ENCODE measurements at regions of chr1 and their contacts with region 1.

Region 1: DNA sequence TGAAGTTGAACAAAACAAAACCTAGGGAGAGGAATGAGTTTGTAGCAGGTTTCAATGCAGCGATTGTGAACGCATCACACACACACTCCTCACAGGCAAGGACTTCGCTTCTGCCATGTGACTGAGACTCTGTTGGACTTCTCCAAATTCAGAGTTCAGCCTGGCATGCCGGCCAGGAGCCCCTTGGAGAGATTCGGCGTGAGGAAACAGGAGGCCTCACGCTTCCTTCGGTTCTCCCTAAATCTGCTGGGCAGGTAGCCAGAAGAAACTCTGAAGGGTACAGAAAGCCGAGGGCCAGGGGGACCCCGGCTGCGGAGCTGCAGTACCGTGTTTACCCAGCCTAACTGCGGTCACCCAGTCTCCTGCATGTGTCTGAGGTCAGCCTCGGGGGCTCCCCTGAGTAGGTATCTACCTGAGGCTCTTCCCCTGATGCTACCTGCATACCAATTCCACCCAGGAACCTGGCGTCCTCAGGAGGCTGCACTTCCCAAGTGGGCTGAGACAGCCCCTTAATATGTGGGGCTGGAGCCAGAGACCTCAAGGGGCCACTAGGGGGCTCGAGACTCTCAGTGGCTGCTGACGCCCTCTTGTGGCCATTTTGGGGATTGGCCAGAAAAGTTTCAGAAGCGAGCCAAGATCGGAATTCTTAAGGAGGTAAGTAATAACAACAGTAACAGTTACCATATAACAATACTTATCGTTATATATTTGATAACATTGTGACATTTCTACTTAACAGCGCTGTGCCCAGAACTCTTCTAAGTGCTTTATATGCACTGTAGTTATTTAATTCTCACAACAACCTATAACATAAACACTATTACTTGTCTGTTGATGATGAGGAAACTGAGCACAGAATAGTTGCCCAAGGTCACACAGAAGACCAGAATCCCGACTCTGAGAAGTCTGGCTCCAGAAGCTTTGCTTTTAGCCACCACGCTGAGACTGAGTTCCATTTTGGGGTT is 2.7 kb upstream of the ANXA9 start:
- DNase-seq: peak; percentile 89
- H3K27ac ChIP-seq: peak overlapping the region; percentile 91
- CTCF ChIP-seq: peak; percentile 99

Region 2: DNA sequence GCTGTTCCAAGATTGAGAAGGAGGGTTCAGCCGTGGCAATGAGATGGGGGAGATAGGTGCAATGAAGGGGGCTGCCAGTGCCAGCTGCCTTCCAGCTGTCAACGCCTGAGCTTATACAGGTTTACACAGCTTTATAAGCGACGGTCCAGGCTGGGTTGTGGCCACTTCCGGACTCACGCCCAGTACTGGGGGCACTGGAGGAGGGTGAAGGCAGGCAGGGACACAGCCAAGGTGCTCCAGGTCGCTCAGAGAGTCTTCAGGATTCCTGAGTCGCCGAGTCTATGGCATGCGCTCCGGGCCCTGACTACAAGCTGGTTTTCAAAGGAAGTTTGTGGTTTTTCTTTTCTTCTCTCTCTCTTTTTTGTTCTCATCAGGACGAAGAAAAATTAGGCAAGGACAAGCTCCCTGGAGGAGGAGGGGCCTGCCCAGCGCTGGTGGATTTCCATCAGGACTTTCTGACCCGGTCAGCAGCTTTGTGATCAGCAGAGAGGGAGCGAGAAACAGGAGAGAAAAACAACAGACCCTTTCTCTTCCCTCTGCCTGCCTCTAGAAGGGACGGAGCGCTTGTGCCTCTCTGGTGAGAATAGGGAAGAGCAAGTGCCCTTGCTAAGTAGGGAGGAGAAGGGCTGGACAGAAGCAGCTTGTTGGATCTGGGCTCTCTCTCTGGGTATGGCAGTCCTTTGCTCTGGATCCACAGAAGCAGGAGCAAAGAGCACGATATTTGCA is 27.1 kb after region 1 on chr1 and contains the start of gene MINDY1:
- CTCF ChIA-PET with region 1: interaction called, 12 read pairs
- POLR2A ChIA-PET with region 1: interaction called, 7 read pairs
- DNase-seq: peak; percentile 84
- H3K27ac ChIP-seq: peak within 1 kb of the TSS; percentile 91
- CTCF ChIP-seq: peak; percentile 64

Measured in RWPE1 (cell line).